SK-N-SH (cell line): ENCODE measurements at regions of chr6 and their contacts with region 1.

Region 1: DNA sequence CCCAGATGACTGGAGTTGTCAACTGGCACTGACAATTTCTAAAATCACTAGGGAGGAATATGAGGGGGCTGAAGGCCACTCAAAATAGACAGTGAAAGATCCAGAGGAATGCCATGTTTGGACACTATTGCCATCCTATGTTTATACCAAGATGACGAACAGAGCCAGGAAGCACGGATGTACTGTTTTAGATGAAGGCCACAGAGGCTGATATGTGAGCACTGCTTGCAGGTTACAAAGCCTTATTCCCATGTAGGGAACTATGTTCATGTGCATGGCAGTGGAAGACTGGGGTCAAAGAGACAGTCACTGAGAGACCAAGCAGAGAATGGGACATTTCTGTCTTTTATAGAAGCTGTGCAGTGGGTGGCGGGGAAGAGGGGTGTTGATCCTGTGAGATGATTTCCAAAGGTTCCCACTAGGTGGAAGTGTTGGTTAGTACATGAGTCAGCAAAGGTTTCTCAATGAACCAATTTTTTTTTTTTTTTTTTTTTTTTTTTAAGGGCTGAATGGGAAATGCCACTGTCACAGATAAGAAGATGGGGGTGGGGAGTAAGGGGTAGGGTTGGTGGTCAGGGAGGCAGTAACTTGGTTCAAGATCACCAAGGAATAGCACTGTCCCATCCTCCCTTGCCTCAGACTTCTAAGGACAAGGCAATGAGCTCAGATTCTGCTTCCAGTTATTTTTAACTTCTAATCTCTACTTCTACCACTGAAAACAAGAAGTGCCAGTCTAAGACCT is 46.7 kb upstream of the MOCS1 start:
- DNase-seq: peak; percentile 59
- H3K4me3 ChIP-seq: no peak overlapping the region; a peak in 1 of 4 replicates
- H3K27ac ChIP-seq: no peak overlapping the region
- H3K4me1 ChIP-seq: no peaks in the 10 kb centered on the region
- H3K27me3 ChIP-seq: no peaks in the 10 kb centered on the region
- CTCF ChIP-seq: peak; percentile 52
- EP300 ChIP-seq: no peak
- RAD21 ChIP-seq: peak; percentile 90

Region 2: GRCh38 chr6:39114704-39115599 is 866.1 kb before region 1 on chr6 and contains the start of gene SAYSD1:
- CTCF ChIA-PET with region 1: no interaction called
- POLR2A ChIA-PET with region 1: no interaction called
- DNase-seq: peak; percentile 93
- H3K4me3 ChIP-seq: peak within 1 kb of the TSS; percentile 81 to 83
- H3K27ac ChIP-seq: peak within 1 kb of the TSS; percentile 77 to 97
- H3K4me1 ChIP-seq: peaks cover 0 to 8% of the 10 kb centered on the region in 2 experiments; a peak in 2 of 4 replicates
- H3K27me3 ChIP-seq: no peaks in the 10 kb centered on the region
- CTCF ChIP-seq: no peak
- EP300 ChIP-seq: no peak
- RAD21 ChIP-seq: no peak
- polyA plus RNA-seq, gene SAYSD1: 6.1 and 7.2 TPM in 2 replicates

Region 3: DNA sequence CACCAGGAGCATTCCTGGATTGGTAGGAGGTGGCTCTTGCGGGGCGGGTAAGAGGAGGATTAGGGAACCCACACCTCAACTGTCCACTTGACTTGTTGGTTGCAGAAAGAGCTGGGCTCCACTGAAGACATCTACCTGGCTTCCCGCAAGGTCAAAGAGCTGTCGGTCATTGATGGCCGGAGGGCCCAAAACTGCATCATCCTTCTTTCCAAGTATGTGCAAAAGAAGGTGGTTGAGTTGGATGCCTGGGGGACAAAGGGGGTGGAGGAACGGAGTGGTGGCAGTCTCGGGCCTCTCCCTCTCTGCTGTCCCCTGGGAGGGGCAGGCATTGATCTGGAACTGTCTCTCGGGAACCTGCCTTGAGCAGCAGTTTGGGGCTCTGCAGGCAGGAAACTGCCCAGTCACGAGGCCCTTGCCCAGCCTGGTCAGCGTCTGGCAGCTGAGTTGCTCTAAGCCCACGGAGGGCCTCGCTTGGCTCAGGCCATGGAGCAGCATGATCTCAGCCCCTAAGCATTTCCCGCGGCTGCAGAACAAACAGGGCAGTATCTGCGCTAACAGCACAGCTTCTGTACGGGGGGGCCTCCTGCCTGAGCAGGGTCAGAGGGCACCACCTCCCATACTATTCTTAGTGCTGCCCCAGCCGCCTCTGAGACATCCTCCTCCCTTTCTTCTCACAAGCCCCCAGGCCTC is 93.5 kb before region 1 on chr6:
- CTCF ChIA-PET with region 1: no interaction called
- POLR2A ChIA-PET with region 1: no interaction called
- DNase-seq: no peak
- H3K4me3 ChIP-seq: no peak overlapping the region
- H3K27ac ChIP-seq: peak overlapping the region in 1 of 2 experiments; percentile 78; a peak in 2 of 4 replicates
- H3K4me1 ChIP-seq: peaks cover 0 to 21% of the 10 kb centered on the region in 2 experiments; a peak in 2 of 4 replicates
- H3K27me3 ChIP-seq: no peaks in the 10 kb centered on the region
- CTCF ChIP-seq: no peak
- EP300 ChIP-seq: peak in 1 of 2 experiments; percentile 52; a peak in 1 of 4 replicates
- RAD21 ChIP-seq: no peak

Region 4: DNA sequence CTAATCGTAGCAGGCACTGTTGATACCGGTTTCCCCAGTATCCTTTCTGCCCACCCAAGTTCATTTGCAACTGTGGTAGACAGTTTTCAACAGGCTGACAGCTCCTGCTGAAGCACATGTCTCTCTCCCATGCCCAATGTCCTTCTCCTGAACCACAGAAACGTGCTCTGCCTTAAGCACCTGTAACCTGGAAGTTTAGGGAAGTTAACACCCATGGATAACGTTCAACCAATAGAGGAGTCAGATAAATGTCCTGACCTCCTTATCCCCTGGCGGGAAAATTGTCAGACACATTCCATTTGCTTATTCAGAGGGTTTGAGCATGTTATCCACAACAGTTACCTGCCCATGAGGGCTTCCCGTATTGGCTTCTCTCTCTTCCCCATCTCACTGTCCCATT is 16.9 kb before region 1 on chr6:
- CTCF ChIA-PET with region 1: interaction called, 10 read pairs
- POLR2A ChIA-PET with region 1: no interaction called
- DNase-seq: no peak
- H3K4me3 ChIP-seq: no peak overlapping the region
- H3K27ac ChIP-seq: no peak overlapping the region
- H3K4me1 ChIP-seq: peaks cover 0 to 4% of the 10 kb centered on the region in 2 experiments; a peak in 2 of 4 replicates
- H3K27me3 ChIP-seq: no peaks in the 10 kb centered on the region
- CTCF ChIP-seq: no peak
- EP300 ChIP-seq: no peak
- RAD21 ChIP-seq: no peak

Region 5: DNA sequence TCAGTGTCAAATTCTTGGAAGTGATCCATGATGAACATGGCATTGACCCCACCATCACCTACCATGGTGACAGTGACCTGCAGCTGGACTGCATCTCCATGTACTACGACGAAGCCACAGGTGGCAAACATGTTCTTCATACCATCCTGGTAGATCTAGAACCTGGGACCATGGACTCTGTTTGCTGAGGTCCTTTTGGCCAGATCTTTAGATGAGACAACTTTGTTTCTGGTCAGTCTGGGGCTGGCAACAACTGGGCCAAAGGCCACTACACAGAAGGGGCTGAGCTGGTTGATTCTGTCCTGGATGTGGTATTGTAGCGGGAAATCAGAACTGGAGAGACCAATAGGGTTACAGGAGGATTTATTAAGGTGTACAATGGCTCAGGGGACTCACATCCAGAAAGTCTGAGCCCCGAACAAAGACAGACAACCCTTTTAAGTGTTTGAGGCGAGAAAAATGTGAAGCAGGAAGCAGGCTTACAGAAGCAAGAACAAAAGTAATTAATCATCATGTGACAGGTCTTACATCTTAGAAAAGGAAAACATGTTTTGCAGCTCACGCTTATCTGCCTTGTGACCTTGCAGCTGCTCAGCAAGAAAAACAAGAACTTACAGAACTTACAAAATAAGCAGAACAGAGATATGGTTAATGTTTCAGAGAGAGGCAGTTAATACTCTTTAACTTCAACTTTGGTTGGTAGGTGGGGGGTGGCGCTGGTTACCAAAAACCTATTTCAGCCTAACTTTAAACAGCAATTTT is 12.0 kb after region 1 on chr6:
- CTCF ChIA-PET with region 1: interaction called, 11 read pairs
- POLR2A ChIA-PET with region 1: no interaction called
- DNase-seq: no peak
- H3K4me3 ChIP-seq: no peak overlapping the region
- H3K27ac ChIP-seq: no peak overlapping the region
- H3K4me1 ChIP-seq: no peaks in the 10 kb centered on the region
- H3K27me3 ChIP-seq: no peaks in the 10 kb centered on the region
- CTCF ChIP-seq: no peak
- EP300 ChIP-seq: no peak
- RAD21 ChIP-seq: no peak

Region 6: DNA sequence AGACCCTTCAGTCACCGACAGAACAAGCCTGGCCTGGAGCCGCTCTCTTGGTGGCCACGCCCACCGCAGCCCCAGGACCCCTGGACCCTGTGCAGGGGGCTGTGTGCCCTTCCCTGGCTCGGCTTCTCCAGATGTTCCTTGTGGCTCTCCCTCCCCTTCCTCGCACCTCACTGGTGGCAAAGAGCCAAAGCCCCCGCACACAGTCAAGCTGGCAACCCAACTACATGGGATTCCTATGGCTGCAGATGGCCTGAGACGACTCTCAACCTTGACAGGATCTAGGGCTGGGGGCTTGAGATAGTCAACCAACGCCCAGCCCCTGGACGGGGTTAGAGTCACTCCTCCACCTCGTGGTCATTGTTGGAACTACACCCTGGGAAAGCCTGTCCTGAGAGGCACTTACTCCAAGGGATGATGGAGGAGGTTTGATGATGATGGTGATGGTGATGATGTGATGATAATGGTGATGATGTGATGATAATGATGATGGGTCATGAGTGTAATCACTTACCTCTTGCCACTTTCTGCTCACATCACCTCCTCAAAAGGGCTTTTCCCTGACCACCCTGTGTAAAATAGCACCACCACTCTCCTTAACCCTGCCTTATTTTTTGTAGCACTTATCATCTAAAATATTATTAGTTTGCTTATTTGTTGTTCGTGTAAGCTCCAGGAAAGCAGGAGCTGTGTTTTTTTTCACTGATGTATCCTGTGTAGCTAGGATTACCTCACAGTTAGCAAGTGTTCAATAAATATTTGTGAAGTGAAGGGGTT is 327.7 kb after region 1 on chr6:
- CTCF ChIA-PET with region 1: interaction called, 17 read pairs
- POLR2A ChIA-PET with region 1: no interaction called
- DNase-seq: peak; percentile 82
- H3K4me3 ChIP-seq: no peak overlapping the region
- H3K27ac ChIP-seq: no peak overlapping the region
- H3K4me1 ChIP-seq: peaks cover 0 to 4% of the 10 kb centered on the region in 2 experiments; a peak in 1 of 4 replicates
- H3K27me3 ChIP-seq: no peaks in the 10 kb centered on the region
- CTCF ChIP-seq: peak; percentile 65
- EP300 ChIP-seq: no peak
- RAD21 ChIP-seq: peak; percentile 77